CD4-positive, alpha-beta T cell (primary cell): ENCODE measurements at regions of chr2 and their contacts with region 1.

Region 1: DNA sequence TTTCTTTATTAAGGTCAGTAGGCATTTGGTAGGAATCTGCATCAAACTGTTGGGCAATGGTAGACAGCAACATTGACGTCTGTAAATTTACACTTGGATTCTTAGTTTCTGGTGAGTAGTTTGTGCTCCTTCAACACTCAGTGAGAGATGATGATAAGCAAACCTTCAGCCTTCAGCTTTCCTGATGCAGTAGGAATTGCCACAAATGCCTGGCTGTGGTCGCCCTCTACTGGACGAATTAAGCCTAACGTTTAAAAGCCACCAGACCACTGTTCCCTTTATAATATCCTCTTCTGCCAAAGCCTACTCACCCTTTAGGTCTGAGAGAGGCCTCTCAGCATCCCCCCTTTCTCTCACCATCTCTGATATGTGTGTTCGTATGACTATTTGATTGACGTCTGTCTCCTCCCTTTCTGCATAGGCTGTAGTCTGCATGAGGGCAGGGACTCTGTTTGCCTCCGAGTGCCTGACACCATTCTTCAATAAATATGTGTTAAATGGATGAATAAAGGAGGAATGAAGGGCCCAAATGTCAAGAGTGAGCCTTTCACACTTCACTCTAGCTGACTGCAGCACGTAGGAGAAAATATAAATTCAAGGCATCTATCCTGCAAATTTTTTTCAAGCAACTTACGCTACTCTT is 47.0 kb upstream of the PLEKHM3 start:
- DNase-seq: peak; percentile 21 to 73 (median 42)
- ATAC-seq: peak; percentile 70
- H3K4me3 ChIP-seq: no peak overlapping the region
- H3K4me3 Mint-ChIP-seq: no peak overlapping the region
- H3K27ac ChIP-seq: no peak overlapping the region
- H3K27ac Mint-ChIP-seq: no peak overlapping the region
- H3K4me1 ChIP-seq: no peaks in the 10 kb centered on the region
- H3K4me1 Mint-ChIP-seq: no peaks in the 10 kb centered on the region
- H3K27me3 ChIP-seq: no peaks in the 10 kb centered on the region
- H3K27me3 Mint-ChIP-seq: peaks cover 16% of the 10 kb centered on the region
- CTCF ChIP-seq: peak; percentile 76

Region 2: DNA sequence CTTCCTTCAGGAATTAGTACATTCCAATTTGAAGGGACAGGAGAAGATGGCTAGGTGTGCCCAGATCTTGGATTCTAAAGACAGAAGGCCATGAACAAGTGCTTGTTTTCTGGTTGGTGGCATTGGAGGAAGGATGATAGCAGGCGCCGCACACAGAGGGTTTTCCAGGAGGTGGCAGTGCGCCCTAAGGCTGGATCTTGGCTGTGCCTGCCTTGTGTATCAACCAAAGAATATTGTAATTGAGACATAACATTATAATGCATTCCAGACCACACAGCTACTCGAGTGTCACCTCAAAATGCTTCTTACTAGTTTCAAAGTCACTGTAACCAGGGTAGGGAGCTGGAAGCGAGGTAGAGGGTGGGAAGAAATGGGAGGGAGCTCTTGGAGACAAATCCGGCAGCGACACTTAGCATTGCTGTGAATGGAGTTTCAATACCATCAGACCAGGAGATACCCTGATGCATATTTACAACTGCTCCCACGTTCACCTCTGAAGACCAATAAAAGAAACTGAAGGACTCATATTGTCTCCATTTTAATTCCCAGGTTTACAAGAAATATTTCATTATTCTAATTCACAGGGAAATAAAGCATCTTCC is 1090.5 kb before region 1 on chr2:
- CTCF ChIA-PET with region 1: no interaction called
- POLR2A ChIA-PET with region 1: no interaction called
- intact Hi-C with region 1: loop called in 1 of 2 experiments (anchors 5 kb)
- DNase-seq: peak; percentile 12 to 68 (median 40)
- ATAC-seq: peak; percentile 67
- H3K4me3 ChIP-seq: no peak overlapping the region
- H3K4me3 Mint-ChIP-seq: no peak overlapping the region
- H3K27ac ChIP-seq: no peak overlapping the region
- H3K27ac Mint-ChIP-seq: no peak overlapping the region
- H3K4me1 ChIP-seq: no peaks in the 10 kb centered on the region
- H3K4me1 Mint-ChIP-seq: peaks cover 26% of the 10 kb centered on the region
- H3K27me3 ChIP-seq: no peaks in the 10 kb centered on the region
- H3K27me3 Mint-ChIP-seq: no peaks in the 10 kb centered on the region
- CTCF ChIP-seq: peak; percentile 39

Region 3: DNA sequence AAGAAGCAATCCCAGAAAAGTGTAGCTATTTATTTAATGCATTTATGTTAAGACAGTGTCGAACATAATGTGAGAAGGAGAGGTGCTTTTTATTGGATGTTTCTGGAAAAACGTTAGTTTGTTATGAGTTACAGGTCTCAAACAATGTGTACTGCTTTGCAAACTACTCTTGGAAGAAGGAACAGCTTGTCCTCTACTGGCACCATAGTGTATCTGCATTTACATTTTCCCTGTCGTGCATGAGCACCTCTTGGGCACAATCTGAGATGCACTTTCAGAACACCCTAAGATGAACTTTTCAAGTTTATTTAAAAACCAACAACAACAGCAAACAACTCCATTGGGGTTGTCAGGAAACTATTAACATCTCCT is 338.1 kb before region 1 on chr2:
- CTCF ChIA-PET with region 1: no interaction called
- POLR2A ChIA-PET with region 1: no interaction called
- intact Hi-C with region 1: no loop called
- DNase-seq: peak in 2 of 14 experiments; percentile 18 to 21
- ATAC-seq: no peak
- H3K4me3 ChIP-seq: no peak overlapping the region
- H3K4me3 Mint-ChIP-seq: no peak overlapping the region
- H3K27ac ChIP-seq: no peak overlapping the region
- H3K27ac Mint-ChIP-seq: no peak overlapping the region
- H3K4me1 ChIP-seq: no peaks in the 10 kb centered on the region
- H3K4me1 Mint-ChIP-seq: peaks cover 4% of the 10 kb centered on the region
- H3K27me3 ChIP-seq: no peaks in the 10 kb centered on the region
- H3K27me3 Mint-ChIP-seq: no peaks in the 10 kb centered on the region
- CTCF ChIP-seq: no peak